Dorsolateral prefrontal cortex (tissue), 120 donors: ENCODE measurements at regions of chr14 and their contacts with region 1.

Region 1: DNA sequence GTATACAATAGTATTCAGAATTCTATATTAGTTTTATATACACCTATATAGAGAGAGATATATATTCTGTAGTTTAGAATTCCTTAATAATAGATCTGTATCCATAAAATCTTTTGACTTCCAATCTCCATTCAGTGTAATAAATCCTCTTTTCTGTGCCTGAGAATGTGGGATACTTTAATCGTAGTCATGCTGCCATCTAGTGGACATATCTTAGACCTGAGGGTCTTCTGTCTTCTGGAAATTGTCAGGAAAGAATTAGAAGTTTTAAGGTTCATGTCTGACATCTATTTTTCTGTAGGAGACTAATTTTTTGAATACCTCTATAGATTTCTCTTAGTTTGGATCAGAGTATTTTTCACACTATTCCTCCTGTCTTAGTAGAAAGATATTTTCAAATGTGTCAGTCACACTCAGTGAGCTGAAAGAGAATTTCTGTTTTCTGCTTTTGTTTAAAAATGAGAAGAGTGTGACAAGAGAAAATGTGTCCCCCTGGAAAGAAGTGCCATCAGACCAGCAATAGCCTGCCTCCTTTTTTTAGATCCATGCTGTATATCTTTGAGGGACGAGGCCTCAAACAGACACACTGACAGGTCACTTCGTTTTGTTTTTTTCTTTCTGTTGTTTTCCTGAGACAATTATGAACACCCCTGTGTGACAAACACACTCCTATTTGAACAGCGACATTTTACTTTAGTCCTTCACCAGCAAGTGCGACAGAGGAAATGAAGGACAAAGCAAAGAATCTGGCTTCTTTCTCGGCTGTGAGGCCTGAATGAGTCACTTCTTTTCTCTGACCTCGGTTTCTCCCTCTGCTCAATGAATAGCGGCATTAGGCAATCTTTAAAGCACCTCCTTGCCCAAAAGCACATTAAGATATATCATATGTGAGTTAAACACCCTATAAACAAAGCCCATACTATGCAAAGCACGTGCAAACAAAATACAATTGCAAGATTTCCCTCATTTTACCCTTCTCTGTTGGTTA is 96.3 kb downstream of the GALC start:
- DNase-seq: no peak
- H3K4me3 ChIP-seq: no peak overlapping the region
- H3K27ac ChIP-seq: no peak overlapping the region
- H3K27me3 ChIP-seq: peaks cover 0 to 2% (median 0%) of the 10 kb centered on the region in 45 donors
- CTCF ChIP-seq: peak; percentile 68 to 96 (median 82)

Region 2: GRCh38 chr14:87745507-87746118 is 151.1 kb before region 1 on chr14:
- intact Hi-C with region 1: loop called (anchors 5 kb)
- DNase-seq: no peak
- H3K4me3 ChIP-seq: no peak overlapping the region
- H3K27ac ChIP-seq: no peak overlapping the region
- H3K27me3 ChIP-seq: peaks cover 0 to 7% (median 0%) of the 10 kb centered on the region in 45 donors
- CTCF ChIP-seq: peak in 55 of 56 donors; percentile 29 to 75 (median 60)

Region 3: DNA sequence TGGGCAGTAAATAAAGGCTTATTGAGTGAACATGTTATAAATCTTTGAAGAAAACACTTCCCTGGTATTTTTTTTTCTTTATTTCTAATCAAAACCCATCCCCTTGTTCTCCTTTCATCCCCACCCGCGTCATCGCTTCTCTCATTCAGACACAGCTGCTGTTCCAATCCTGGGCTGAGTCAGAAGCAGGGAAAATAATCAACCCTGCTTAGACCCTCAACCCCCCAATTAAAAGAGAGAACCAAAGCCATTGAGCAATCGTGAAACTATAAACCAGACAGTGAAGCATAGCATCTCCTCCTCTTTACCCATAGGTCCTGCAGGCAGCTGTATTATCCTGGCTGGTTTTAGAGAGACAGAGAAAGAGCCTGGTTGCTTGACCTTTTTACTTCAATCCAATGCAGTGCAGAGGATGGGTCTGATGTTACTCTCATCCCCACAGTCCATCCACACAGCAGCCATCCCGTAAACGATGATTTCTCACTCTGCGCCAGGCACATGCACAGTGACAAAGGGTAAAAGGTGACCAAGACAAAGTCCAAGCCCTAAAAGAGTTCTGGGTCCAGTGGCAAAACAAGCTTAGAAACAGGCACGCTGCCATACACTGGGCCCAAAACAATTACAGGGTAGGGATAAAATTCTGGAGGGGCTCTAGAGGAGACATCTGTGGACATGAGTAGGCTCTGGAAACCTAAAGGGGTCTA is 142.0 kb before region 1 on chr14:
- intact Hi-C with region 1: loop called (anchors 5 kb)
- DNase-seq: no peak
- H3K4me3 ChIP-seq: no peak overlapping the region
- H3K27ac ChIP-seq: no peak overlapping the region
- H3K27me3 ChIP-seq: peaks cover 0 to 6% (median 0%) of the 10 kb centered on the region in 45 donors
- CTCF ChIP-seq: no peak

Region 4: DNA sequence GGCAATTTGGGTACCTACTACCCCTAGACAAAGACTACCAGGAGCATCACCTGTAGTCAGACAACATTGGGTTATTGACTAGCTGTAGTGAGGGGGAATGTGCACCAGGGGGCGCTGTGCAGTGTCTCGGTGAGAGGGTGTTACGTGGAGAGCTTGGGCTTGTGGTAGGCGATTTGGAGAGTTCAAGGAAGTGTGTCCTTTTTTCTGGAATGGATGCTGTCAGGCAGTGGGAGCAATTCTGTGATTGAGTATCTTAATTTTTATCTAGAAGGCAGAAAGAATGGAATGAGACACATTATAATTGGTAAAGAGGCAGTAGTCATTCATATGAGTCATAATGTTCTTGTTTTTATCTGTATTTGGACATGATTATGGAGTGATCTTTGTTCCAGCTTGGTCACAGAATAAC is 91.4 kb before region 1 on chr14:
- intact Hi-C with region 1: loop called in 1 of 2 experiments (anchors 10 kb)
- DNase-seq: no peak
- H3K4me3 ChIP-seq: no peak overlapping the region
- H3K27ac ChIP-seq: no peak overlapping the region
- H3K27me3 ChIP-seq: no peaks in the 10 kb centered on the region
- CTCF ChIP-seq: peak in 54 of 56 donors; percentile 24 to 73 (median 52)